Naive thymus-derived CD4-positive, alpha-beta T cell (primary cell): ENCODE measurements at regions of chr7 and their contacts with region 1.

Region 1: DNA sequence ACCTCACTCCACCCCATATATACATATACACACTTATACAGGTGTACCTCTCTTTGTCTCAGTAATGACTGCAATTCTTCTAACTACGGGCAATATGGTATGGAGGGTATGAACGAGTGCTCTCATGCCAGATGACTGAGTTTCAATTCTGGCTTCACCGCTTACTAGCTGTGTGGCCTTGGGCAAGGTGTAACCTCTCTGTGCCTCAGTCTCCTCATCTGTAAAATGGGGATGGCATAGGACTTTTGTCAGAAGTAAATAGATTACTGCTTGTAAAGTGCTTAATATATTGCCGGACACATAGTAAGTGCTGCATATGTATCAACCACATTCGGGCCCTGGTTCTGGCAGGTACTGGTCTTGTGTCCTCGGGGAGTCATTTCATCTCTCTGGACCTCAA is 60.1 kb upstream of the IFRD1 start:
- DNase-seq: no peak
- ATAC-seq: no peak
- H3K4me3 ChIP-seq: no peak overlapping the region
- H3K4me3 Mint-ChIP-seq: peak overlapping the region in 7 of 10 donors; percentile 23 to 87 (median 86)
- H3K27ac ChIP-seq: no peak overlapping the region
- H3K27ac Mint-ChIP-seq: peak overlapping the region in 2 of 9 donors; percentile 57 to 95
- H3K4me1 ChIP-seq: peaks cover 0 to 8% of the 10 kb centered on the region in 2 donors
- H3K4me1 Mint-ChIP-seq: peaks cover 9 to 28% (median 15%) of the 10 kb centered on the region in 7 donors
- H3K27me3 ChIP-seq: no peaks in the 10 kb centered on the region
- H3K27me3 Mint-ChIP-seq: peaks cover 0 to 39% (median 0%) of the 10 kb centered on the region in 5 donors

Region 2: DNA sequence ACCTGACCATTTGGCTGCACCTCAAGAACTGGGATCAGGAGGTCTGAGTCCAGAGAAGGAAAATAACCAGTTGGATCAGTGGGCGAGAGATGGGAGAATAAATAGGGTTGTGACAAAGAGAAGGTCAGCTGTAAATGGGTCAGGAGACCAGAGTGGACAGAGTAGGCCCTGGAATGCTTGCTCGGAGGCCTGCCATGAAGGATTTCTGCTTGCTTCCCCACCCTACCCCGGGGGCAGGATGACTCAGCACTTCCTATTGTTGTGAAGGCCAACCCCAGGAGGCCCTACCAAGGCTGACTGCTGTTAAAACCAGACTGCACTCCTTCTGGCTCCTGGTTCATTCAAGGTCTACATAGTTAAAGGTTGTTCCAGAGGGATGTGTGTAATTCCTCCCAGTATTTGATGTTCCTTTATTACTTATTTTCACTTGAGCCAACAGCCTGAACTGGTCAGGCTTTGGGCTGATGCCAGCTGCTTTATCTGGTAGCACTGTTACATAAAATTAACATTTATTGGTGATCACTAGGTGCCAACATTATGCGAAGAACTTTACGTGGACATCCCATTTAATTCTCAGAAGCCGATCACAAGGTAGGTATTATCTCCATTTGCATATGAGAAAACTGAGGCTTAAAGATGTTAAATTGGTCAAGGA is 32.8 kb after region 1 on chr7:
- CTCF ChIA-PET with region 1: no interaction called
- POLR2A ChIA-PET with region 1: no interaction called
- intact Hi-C with region 1: loop called in 1 of 2 experiments (anchors 2 kb)
- DNase-seq: no peak
- ATAC-seq: peak; percentile 45
- H3K4me3 ChIP-seq: no peak overlapping the region
- H3K4me3 Mint-ChIP-seq: peak overlapping the region in 2 of 10 donors; percentile 51 to 52
- H3K27ac ChIP-seq: no peak overlapping the region
- H3K27ac Mint-ChIP-seq: peak overlapping the region in 5 of 9 donors; percentile 14 to 76 (median 71)
- H3K4me1 ChIP-seq: peaks cover 0 to 16% of the 10 kb centered on the region in 2 donors
- H3K4me1 Mint-ChIP-seq: peaks cover 14 to 29% (median 25%) of the 10 kb centered on the region in 7 donors
- H3K27me3 ChIP-seq: no peaks in the 10 kb centered on the region
- H3K27me3 Mint-ChIP-seq: peaks cover 0 to 2% (median 0%) of the 10 kb centered on the region in 5 donors

Region 3: DNA sequence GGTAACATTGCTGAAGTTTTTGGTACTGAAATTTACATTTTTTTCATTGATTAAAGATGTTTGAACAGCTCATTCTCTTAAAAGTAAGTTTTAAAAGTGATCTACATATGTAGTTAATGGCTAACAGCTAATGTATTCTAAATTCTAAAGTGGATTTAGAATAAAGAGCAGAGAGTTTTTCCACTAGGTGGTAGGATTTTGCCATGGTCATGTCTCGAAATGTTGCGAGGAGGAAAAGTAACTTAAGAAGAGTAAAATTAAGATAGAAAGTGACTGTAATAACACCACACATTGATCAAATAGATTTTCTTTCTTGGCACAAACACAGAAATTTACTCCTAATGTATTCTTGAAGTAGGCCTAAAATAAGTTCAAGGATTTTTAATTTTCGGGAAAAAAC is 110.5 kb after region 1 on chr7:
- CTCF ChIA-PET with region 1: no interaction called
- POLR2A ChIA-PET with region 1: no interaction called
- intact Hi-C with region 1: no loop called
- DNase-seq: no peak
- ATAC-seq: no peak
- H3K4me3 ChIP-seq: no peak overlapping the region
- H3K4me3 Mint-ChIP-seq: no peak overlapping the region
- H3K27ac ChIP-seq: no peak overlapping the region
- H3K27ac Mint-ChIP-seq: no peak overlapping the region
- H3K4me1 ChIP-seq: no peaks in the 10 kb centered on the region
- H3K4me1 Mint-ChIP-seq: no peaks in the 10 kb centered on the region
- H3K27me3 ChIP-seq: no peaks in the 10 kb centered on the region
- H3K27me3 Mint-ChIP-seq: peaks cover 4 to 19% (median 10%) of the 10 kb centered on the region in 5 donors

Region 4: DNA sequence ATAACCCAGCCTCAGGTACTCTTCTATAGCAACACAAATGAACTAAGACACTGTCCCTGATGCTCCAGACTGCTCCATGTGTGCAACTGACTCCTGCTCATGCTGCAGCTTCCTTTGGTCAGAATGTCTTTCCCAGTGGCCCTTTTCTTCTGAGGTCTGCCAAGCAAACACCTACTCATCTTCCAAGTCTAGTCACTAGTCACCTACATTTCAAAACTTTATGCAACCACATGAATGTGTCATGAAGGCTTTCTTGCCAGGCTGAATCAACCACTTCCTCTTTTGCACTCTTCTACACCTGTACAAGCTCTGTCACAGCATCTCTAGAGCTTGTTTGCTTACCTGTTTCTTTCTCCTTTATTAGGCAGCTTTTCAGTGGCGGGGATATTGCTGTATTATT is 166.5 kb after region 1 on chr7:
- CTCF ChIA-PET with region 1: no interaction called
- POLR2A ChIA-PET with region 1: no interaction called
- intact Hi-C with region 1: no loop called
- DNase-seq: peak in 5 of 9 donors; percentile 18 to 38 (median 25)
- ATAC-seq: peak; percentile 51
- H3K4me3 ChIP-seq: no peak overlapping the region
- H3K4me3 Mint-ChIP-seq: no peak overlapping the region
- H3K27ac ChIP-seq: no peak overlapping the region
- H3K27ac Mint-ChIP-seq: peak overlapping the region in 5 of 9 donors; percentile 2 to 85 (median 52)
- H3K4me1 ChIP-seq: no peaks in the 10 kb centered on the region
- H3K4me1 Mint-ChIP-seq: peaks cover 6 to 19% (median 16%) of the 10 kb centered on the region in 7 donors
- H3K27me3 ChIP-seq: no peaks in the 10 kb centered on the region
- H3K27me3 Mint-ChIP-seq: peaks cover 0 to 10% (median 3%) of the 10 kb centered on the region in 5 donors

Region 5: GRCh38 chr7:113118074-113118959 is 728.1 kb after region 1 on chr7 and contains the start of gene SMIM30:
- CTCF ChIA-PET with region 1: no interaction called
- POLR2A ChIA-PET with region 1: interaction called, 3 read pairs
- intact Hi-C with region 1: loop called in 1 of 2 experiments (anchors 2 kb)
- DNase-seq: peak; percentile 59 to 90 (median 86)
- ATAC-seq: peak; percentile 100
- H3K4me3 ChIP-seq: peak within 1 kb of the TSS; percentile 75
- H3K4me3 Mint-ChIP-seq: peak within 1 kb of the TSS; percentile 81 to 99 (median 96)
- H3K27ac ChIP-seq: peak within 1 kb of the TSS; percentile 80
- H3K27ac Mint-ChIP-seq: peak within 1 kb of the TSS; percentile 82 to 99 (median 94)
- H3K4me1 ChIP-seq: peaks cover 0 to 6% of the 10 kb centered on the region in 2 donors
- H3K4me1 Mint-ChIP-seq: peaks cover 6 to 32% (median 22%) of the 10 kb centered on the region in 7 donors
- H3K27me3 ChIP-seq: no peaks in the 10 kb centered on the region
- H3K27me3 Mint-ChIP-seq: no peaks in the 10 kb centered on the region
- total RNA-seq, gene SMIM30: 9.3 to 21.0 (median 20.5) TPM